Transverse colon (tissue), 4 donors: ENCODE measurements at regions of chr11 and their contacts with region 1.

Region 1: DNA sequence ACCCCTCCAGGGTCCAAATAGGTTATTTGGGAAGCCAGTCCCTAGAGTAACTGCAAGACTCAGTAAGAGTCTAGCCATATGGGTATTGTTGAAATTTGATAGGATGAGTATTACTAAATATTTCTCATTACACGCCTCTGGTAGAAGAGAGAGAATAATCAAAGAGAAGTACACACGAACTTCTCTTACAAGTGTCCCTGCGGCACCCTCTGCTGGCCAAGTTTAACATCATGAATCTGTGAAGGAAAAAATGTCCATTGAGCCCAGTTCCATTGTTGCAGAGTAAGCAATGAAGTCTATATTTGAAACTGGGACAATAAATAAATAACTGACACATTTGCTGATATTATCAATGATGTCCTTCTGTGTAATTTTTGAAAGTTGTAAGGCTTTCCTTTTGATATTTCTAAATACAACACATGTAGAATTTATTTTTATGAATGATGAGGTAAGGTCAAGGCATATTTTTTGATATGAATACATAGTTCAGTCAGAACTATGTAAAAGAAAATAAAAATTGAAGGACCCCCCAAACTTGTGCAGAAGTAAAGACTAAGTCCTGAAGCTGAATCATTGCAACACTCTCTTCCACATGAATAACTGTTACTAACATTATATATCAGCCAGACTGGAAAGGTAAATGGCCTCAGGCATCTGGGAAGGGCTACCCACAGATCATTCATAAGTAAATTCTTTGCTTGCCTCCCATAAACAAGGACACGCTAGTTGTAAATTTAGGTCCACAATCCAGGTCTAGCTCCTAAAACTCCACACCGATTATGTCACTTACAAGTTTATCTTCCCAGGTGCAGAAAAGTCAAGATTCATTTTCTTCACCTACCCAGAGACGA is 10.0 kb downstream of the OR51L1 start:
- DNase-seq: peak; percentile 46
- H3K4me3 ChIP-seq: no peak overlapping the region
- H3K27ac ChIP-seq: no peak overlapping the region
- H3K4me1 ChIP-seq: no peaks in the 10 kb centered on the region
- H3K27me3 ChIP-seq: no peaks in the 10 kb centered on the region
- CTCF ChIP-seq: peak; percentile 47 to 56 (median 50)
- EP300 ChIP-seq: no peak
- POLR2A ChIP-seq: no peak

Region 2: DNA sequence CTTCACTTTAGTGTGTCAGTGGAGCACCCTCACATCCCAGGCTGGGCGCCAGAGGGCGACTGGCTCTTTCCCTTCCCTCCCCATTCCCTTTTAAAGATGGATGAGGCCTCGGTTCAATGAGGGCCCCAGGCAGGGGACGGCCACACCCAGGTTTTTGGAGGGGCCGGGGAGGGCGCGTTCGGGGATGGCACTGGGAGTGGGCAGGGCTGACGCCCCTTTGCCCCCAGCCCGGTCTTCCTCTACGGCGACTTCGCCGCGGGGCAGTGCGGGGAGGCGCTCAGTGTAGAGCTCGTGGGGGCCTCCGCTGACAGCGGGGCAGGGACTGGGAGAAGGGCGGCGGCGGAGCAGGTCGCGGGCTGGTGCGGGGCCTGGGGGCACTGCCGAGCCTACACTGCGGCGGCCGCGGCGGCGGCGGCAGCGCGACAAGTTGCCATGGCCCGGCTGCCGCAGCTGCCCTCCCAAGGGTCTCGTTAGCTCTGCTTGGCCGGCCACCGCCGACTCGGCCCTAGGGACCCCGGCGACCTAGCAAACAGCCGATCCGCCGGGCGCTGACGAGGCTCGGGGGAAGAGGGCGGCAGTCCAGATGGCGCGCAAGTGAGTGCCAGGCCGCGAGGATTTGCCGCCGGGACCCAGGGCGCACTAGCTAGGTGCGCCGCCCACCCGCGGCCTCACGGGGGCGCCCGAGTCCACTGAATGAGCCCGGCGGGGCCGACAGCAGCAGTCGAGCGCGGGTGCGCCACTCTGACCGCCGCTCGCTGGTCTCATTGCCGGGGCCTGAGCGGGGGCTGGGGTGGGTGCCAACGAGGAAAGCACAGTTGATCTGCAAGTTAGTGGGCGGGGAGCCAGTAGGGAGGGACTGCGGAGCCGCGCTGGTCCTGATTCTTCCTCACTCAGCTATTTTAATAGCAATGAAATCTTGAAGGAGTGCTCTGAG is 817.3 kb before region 1 on chr11:
- in situ Hi-C with region 1: loop called in 1 of 4 experiments (anchors 25 kb)
- intact Hi-C with region 1: no loop called
- DNase-seq: peak; percentile 88
- H3K4me3 ChIP-seq: peak overlapping the region; percentile 35 to 64 (median 52)
- H3K27ac ChIP-seq: peak overlapping the region; percentile 47 to 73 (median 66)
- H3K4me1 ChIP-seq: peaks cover 0 to 6% (median 5%) of the 10 kb centered on the region in 4 donors
- H3K27me3 ChIP-seq: no peaks in the 10 kb centered on the region
- CTCF ChIP-seq: peak; percentile 80 to 98 (median 94)
- EP300 ChIP-seq: no peak
- POLR2A ChIP-seq: no peak

Region 3: DNA sequence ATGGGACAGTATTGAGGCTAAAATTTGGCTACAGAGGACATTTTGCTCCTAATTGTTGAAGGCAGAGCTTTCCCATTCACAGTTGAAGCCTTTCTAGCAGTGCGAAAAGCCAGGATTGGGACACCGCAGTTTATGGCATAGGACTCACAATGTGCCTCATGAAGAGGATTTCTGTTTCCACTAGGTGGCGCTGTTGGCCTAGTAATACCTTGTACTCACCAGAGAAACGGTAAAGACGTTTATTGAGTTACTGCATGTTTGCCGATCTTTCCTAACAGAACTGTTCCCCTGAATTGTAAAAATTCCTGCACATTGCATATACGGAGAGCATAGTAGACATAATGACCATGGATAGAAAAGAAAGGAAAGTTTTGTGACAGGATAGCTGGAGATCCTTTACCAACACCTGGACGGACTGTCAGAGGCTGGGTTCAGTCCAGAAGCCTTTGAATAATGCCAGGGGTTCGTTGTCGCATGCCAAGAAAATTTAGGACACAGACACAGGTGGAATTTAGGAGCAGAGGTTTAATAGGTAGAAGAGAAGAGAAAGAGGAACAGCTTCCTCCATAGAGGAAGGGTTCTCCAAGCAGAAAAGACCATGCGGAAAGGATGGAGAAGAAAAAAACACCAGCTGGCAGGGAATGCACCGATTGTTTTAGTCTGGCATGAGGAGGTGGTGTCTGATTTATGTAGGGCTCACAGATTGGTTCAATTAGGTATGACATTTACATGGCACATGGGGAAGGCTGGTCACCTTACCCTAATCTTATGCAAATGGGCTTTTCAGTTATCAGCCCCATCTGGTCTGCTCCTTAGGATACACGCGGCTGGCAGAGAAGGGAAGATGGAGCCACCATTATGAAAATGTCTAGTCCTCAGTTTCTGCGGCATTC is 378.2 kb before region 1 on chr11:
- in situ Hi-C with region 1: loop called (anchors 10 to 25 kb)
- intact Hi-C with region 1: loop called (anchors 10 kb)
- DNase-seq: peak; percentile 74
- H3K4me3 ChIP-seq: no peak overlapping the region
- H3K27ac ChIP-seq: no peak overlapping the region
- H3K4me1 ChIP-seq: no peaks in the 10 kb centered on the region
- H3K27me3 ChIP-seq: no peaks in the 10 kb centered on the region
- CTCF ChIP-seq: peak; percentile 67 to 81 (median 68)
- EP300 ChIP-seq: no peak
- POLR2A ChIP-seq: no peak

Region 4: DNA sequence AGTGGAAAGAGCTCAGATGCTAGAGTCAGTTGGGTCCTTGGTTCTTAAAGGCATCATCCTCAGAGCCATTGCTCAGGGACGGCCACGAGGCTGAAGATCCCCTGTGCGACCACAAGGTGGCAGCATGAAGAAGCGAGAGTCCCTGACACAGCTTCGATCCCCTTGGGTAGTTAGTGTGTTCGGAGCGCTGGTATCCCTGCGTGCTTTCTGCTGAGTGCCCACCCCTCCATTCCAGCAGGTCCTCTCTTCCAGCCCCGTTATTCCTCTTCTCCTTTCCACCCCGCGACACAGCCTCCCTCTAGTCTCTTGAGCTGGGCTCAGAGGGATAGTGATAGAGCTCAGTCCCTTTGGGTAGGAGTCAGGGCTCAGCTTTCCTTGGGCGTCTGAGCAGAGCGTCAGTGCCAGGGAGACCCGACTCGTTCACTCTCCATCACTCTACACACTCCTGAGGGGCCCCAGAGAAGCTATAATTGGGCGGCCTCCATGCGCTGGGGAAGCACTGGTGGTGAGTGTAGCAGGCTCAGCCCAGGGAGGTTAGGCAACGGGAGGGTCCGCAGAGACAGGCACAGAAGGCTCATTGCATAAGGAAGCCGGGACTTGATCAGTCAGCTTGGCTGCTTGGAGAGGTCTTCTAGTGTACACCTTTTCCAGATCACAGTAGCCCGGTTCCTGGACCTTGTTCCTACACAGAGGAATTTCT is 367.5 kb before region 1 on chr11 and contains the start of gene OR51D1:
- in situ Hi-C with region 1: loop called (anchors 10 to 25 kb)
- intact Hi-C with region 1: no loop called
- DNase-seq: peak; percentile 77
- H3K4me3 ChIP-seq: peak within 1 kb of the TSS in 2 of 4 donors; percentile 4 to 15
- H3K27ac ChIP-seq: no peak within 1 kb of the TSS
- H3K4me1 ChIP-seq: peaks cover 0 to 4% (median 0%) of the 10 kb centered on the region in 4 donors
- H3K27me3 ChIP-seq: peaks cover 3% of the 10 kb centered on the region
- CTCF ChIP-seq: peak; percentile 74 to 90 (median 84)
- EP300 ChIP-seq: no peak
- POLR2A ChIP-seq: no peak
- total RNA-seq, gene OR51D1: not detected

Region 5: DNA sequence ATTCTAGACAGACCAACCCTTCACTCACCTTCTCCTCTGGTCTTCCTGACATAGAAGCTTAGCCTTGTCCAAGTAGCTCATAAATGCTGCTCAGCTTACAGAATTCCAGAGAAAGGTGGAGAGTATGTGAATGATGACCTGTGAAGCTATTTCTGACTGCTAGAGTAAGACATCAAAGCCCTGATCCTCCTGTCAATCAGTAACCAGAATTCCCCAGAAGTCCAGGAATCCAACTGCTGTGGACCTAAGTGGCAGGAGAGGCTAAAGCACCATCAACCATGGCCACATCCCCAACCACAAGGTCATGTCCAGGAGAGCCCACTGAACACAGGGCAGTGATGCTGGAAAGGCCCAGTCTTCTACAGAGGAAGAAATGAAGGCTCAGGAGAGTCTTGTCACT is 88.1 kb before region 1 on chr11:
- in situ Hi-C with region 1: loop called in 1 of 4 experiments (anchors 25 kb)
- intact Hi-C with region 1: no loop called
- DNase-seq: no peak
- H3K4me3 ChIP-seq: no peak overlapping the region
- H3K27ac ChIP-seq: no peak overlapping the region
- H3K4me1 ChIP-seq: no peaks in the 10 kb centered on the region
- H3K27me3 ChIP-seq: no peaks in the 10 kb centered on the region
- CTCF ChIP-seq: no peak
- EP300 ChIP-seq: no peak
- POLR2A ChIP-seq: no peak